CD4-positive, alpha-beta memory T cell (primary cell): ENCODE measurements at regions of chr2 and their contacts with region 1.

Region 1: GRCh38 chr2:239401067-239401880 is 454 bp upstream of the HDAC4 start:
- DNase-seq: peak; percentile 99 to 100 (median 100)
- H3K4me3 ChIP-seq: peak overlapping the region; percentile 87 to 89
- H3K4me3 Mint-ChIP-seq: peak overlapping the region; percentile 83 to 96 (median 92)
- H3K27ac ChIP-seq: peak overlapping the region; percentile 100
- H3K27ac Mint-ChIP-seq: peak overlapping the region; percentile 92 to 100 (median 98)
- H3K4me1 ChIP-seq: peaks cover 30% of the 10 kb centered on the region
- H3K4me1 Mint-ChIP-seq: peaks cover 15 to 54% (median 34%) of the 10 kb centered on the region in 4 donors
- H3K27me3 ChIP-seq: no peaks in the 10 kb centered on the region
- H3K27me3 Mint-ChIP-seq: no peaks in the 10 kb centered on the region

Region 2: GRCh38 chr2:239275044-239275685 is 126.1 kb before region 1 on chr2:
- CTCF ChIA-PET with region 1: interaction called, 6 read pairs
- POLR2A ChIA-PET with region 1: interaction called, 13 read pairs
- intact Hi-C with region 1: no loop called
- DNase-seq: peak; percentile 86 to 96 (median 87)
- H3K4me3 ChIP-seq: peak overlapping the region; percentile 49 to 61
- H3K4me3 Mint-ChIP-seq: peak overlapping the region; percentile 86 to 94 (median 89)
- H3K27ac ChIP-seq: peak overlapping the region; percentile 75
- H3K27ac Mint-ChIP-seq: peak overlapping the region; percentile 90 to 99 (median 97)
- H3K4me1 ChIP-seq: peaks cover 38% of the 10 kb centered on the region
- H3K4me1 Mint-ChIP-seq: peaks cover 27 to 65% (median 39%) of the 10 kb centered on the region in 4 donors
- H3K27me3 ChIP-seq: no peaks in the 10 kb centered on the region
- H3K27me3 Mint-ChIP-seq: no peaks in the 10 kb centered on the region

Region 3: GRCh38 chr2:239326831-239327535 is 74.3 kb before region 1 on chr2:
- CTCF ChIA-PET with region 1: interaction called, 3 read pairs
- POLR2A ChIA-PET with region 1: interaction called, 8 read pairs
- intact Hi-C with region 1: loop called (anchors 5 kb)
- DNase-seq: peak; percentile 65 to 89 (median 70)
- H3K4me3 ChIP-seq: no peak overlapping the region
- H3K4me3 Mint-ChIP-seq: peak overlapping the region in 7 of 8 donors; percentile 46 to 76 (median 59)
- H3K27ac ChIP-seq: peak overlapping the region; percentile 46
- H3K27ac Mint-ChIP-seq: peak overlapping the region; percentile 89 to 96 (median 95)
- H3K4me1 ChIP-seq: peaks cover 61% of the 10 kb centered on the region
- H3K4me1 Mint-ChIP-seq: peaks cover 43 to 79% (median 59%) of the 10 kb centered on the region in 4 donors
- H3K27me3 ChIP-seq: no peaks in the 10 kb centered on the region
- H3K27me3 Mint-ChIP-seq: no peaks in the 10 kb centered on the region

Region 4: DNA sequence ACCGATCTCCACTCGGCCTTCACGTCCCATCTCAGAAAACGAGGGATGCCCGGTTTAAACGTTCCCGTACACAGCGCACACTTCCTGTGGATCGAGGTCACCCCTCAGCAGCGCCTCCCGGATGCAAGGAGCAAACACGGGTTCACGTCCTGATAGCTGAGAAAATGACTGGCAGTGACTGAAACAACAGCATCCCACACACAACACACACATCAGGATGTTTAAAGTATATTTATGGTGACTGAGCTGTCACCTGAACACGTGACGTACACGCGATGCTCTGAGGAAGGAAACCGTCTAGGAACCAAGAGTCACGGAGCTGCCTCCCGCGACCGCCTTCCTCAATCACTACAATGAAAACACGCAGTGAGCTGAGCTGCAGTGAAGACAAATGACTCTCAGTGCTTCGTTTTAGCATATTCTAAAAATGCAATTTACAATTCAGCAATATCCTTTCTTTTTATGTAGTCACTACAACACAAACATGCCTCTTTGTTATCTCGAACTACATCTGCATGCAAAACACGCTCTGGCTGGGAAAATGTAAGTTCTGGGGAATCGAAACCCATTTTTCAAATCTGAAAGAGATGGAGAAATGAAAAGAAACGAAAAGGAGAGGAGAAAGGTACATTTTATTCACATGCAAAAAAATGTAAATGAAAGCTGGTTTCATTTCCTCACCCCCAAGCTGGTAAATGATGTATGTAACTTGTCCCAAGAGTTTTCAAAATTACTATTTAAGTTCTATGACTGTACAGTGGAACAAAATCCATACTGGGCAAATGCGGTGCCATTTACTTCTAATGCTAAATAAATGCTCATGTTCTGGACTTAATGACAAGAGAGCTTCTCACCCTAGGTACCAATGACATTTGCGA is 20.2 kb before region 1 on chr2:
- CTCF ChIA-PET with region 1: interaction called, 6 read pairs
- POLR2A ChIA-PET with region 1: interaction called, 38 read pairs
- intact Hi-C with region 1: loop called (anchors 2 kb)
- DNase-seq: peak; percentile 68 to 87 (median 77)
- H3K4me3 ChIP-seq: peak overlapping the region; percentile 39 to 49
- H3K4me3 Mint-ChIP-seq: peak overlapping the region; percentile 83 to 94 (median 87)
- H3K27ac ChIP-seq: peak overlapping the region; percentile 62
- H3K27ac Mint-ChIP-seq: peak overlapping the region; percentile 90 to 99 (median 96)
- H3K4me1 ChIP-seq: peaks cover 21% of the 10 kb centered on the region
- H3K4me1 Mint-ChIP-seq: peaks cover 17 to 31% (median 19%) of the 10 kb centered on the region in 4 donors
- H3K27me3 ChIP-seq: no peaks in the 10 kb centered on the region
- H3K27me3 Mint-ChIP-seq: no peaks in the 10 kb centered on the region

Region 5: GRCh38 chr2:239927424-239927981 is 526.2 kb after region 1 on chr2:
- CTCF ChIA-PET with region 1: no interaction called
- POLR2A ChIA-PET with region 1: no interaction called
- intact Hi-C with region 1: loop called (anchors 1 kb)
- DNase-seq: peak; percentile 45 to 90 (median 56)
- H3K4me3 ChIP-seq: peak overlapping the region; percentile 39 to 48
- H3K4me3 Mint-ChIP-seq: peak overlapping the region; percentile 79 to 91 (median 86)
- H3K27ac ChIP-seq: peak overlapping the region; percentile 27
- H3K27ac Mint-ChIP-seq: peak overlapping the region; percentile 73 to 91 (median 86)
- H3K4me1 ChIP-seq: peaks cover 10% of the 10 kb centered on the region
- H3K4me1 Mint-ChIP-seq: peaks cover 9 to 21% (median 12%) of the 10 kb centered on the region in 4 donors
- H3K27me3 ChIP-seq: no peaks in the 10 kb centered on the region
- H3K27me3 Mint-ChIP-seq: peaks cover 4 to 5% of the 10 kb centered on the region in 2 donors

Region 6: DNA sequence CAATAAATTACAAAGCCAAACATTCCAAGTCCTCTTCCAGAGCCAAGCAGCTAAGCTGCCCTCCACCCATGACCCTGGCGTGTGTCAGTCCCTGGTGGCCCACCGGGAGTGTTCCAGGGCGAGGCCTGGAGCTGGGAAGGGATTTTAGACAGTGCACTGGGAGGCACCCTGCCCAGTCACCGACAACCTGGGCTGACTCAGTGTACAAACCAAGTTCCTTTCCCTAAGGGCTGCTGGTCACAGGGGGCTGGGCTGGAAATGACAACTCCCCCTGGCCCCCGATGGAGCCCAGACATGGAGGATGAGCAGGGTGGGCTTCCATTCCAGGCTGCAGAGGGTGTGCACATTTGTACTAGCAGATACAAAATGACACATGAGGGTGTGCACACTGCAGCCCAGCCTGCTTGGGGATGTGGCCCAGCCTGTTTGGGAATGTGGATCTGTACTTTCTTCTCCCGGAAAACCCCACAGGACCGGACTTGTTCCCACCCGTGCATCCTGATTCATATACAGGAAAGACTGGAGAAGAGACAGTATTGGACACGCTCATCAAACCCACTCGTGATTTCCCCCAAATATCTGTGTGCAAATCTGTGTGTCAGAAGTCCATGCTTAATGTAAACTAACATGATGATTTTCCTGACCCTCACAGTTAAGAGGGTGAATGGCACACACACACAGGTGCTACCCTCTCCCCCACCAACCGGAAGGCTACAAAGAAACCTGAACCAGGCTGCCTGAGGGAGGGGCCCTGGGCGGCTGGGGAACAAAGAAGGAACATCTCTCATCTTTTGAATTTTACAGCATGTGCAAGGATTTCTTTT is 565.0 kb after region 1 on chr2:
- CTCF ChIA-PET with region 1: no interaction called
- POLR2A ChIA-PET with region 1: no interaction called
- intact Hi-C with region 1: no loop called
- DNase-seq: no peak
- H3K4me3 ChIP-seq: no peak overlapping the region
- H3K4me3 Mint-ChIP-seq: no peak overlapping the region
- H3K27ac ChIP-seq: no peak overlapping the region
- H3K27ac Mint-ChIP-seq: no peak overlapping the region
- H3K4me1 ChIP-seq: no peaks in the 10 kb centered on the region
- H3K4me1 Mint-ChIP-seq: peaks cover 0 to 4% (median 2%) of the 10 kb centered on the region in 4 donors
- H3K27me3 ChIP-seq: no peaks in the 10 kb centered on the region
- H3K27me3 Mint-ChIP-seq: no peaks in the 10 kb centered on the region

Region 7: DNA sequence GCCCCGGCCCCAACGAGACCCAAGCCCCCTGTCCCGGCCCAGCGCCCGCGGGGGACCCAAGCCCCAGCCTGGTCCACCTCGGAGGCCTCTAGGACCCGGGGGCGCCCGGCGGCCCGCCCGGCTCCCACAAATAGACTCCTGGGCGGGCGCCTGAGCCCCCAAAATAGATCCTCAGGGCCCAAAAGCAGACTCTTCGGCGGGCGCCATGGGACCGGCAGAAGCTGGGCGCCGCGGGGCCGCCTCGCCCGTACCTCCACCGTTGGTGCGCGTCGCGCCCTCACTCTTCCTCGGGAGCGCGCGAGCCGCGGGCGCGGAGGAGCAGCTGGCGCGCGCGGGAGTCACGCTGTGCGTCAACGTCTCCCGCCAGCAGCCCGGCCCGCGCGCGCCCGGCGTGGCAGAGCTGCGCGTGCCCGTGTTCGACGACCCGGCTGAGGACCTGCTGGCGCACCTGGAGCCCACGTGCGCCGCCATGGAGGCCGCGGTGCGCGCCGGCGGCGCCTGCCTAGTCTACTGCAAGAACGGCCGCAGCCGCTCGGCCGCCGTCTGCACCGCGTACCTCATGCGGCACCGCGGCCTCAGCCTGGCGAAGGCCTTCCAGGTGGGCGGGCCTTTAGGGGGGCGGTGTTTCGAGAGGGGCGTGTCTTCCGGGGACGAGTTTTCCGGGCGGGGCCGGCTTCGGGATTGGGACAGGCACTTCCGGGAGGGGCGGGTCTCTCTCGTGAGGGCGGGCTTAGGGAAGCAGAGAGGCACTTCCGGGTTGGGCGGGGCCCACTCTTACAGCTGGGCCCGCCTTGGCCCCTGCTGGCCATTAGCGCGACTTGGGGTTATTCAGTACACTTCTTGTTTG is 1159.4 kb after region 1 on chr2:
- CTCF ChIA-PET with region 1: no interaction called
- POLR2A ChIA-PET with region 1: no interaction called
- intact Hi-C with region 1: loop called (anchors 5 kb)
- DNase-seq: peak; percentile 99 to 100 (median 99)
- H3K4me3 ChIP-seq: peak overlapping the region; percentile 54 to 90
- H3K4me3 Mint-ChIP-seq: peak overlapping the region; percentile 84 to 91 (median 88)
- H3K27ac ChIP-seq: peak overlapping the region; percentile 86
- H3K27ac Mint-ChIP-seq: peak overlapping the region; percentile 86 to 99 (median 94)
- H3K4me1 ChIP-seq: peaks cover 85% of the 10 kb centered on the region
- H3K4me1 Mint-ChIP-seq: peaks cover 47 to 84% (median 67%) of the 10 kb centered on the region in 4 donors
- H3K27me3 ChIP-seq: no peaks in the 10 kb centered on the region
- H3K27me3 Mint-ChIP-seq: no peaks in the 10 kb centered on the region